ENCODE measurements at regions of chr9 and their contacts with region 1.

Region 1: GRCh38 chr9:133726401-133727276 is 11.5 kb downstream of the SARDH start:
- DNase-seq: peak; percentile 87
- H3K4me3 Mint-ChIP-seq: no peak overlapping the region
- H3K27ac Mint-ChIP-seq: no peak overlapping the region
- H3K4me1 Mint-ChIP-seq: peaks cover 2% of the 10 kb centered on the region
- H3K27me3 Mint-ChIP-seq: peaks cover 9% of the 10 kb centered on the region

Region 2: GRCh38 chr9:133532937-133533668 is 193.5 kb before region 1 on chr9:
- intact Hi-C with region 1: loop called (anchors 1 kb)
- DNase-seq: peak; percentile 88
- H3K4me3 Mint-ChIP-seq: no peak overlapping the region
- H3K27ac Mint-ChIP-seq: no peak overlapping the region
- H3K4me1 Mint-ChIP-seq: no peaks in the 10 kb centered on the region
- H3K27me3 Mint-ChIP-seq: peaks cover 18% of the 10 kb centered on the region

Region 3: DNA sequence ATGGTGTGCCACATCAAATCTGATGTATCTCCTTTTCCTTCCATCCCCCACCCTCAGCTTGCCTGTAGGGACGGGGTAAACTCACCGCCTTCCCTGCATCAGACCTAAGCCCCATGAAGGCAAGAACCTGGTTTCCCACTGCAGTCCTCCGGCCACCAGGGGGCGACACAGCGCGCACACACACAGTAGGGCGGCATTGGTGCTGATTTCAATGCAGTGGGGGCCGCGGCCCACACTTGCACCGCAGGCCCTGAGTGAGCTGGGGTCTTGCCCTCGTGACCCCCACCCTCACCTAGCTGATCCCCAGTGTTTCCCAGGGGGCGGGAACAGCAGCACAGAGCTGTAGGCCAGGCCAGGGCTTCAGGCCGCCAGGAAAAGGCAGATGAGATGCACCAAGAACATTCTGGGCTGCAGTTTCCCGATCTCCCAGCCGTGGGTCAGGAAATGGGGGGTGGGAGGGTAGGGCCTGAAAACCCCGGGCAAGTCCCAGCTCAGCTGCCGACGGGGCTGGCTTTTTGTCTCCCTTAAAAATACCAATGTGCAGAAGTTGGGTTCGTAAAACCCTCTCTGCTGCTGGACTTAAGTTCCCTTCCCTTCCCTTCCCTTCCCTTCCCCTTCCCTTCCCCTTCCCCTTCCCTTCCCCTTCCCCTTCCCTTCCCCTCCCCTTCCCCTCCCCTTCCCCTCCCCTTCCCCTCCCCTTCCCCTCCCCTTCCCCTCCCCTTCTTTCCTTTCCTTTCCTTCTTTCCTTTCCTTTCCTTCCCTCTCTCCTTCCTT is 137.0 kb before region 1 on chr9:
- intact Hi-C with region 1: loop called (anchors 10 kb)
- DNase-seq: peak; percentile 77
- H3K4me3 Mint-ChIP-seq: no peak overlapping the region
- H3K27ac Mint-ChIP-seq: no peak overlapping the region
- H3K4me1 Mint-ChIP-seq: no peaks in the 10 kb centered on the region
- H3K27me3 Mint-ChIP-seq: peaks cover 9% of the 10 kb centered on the region

Region 4: DNA sequence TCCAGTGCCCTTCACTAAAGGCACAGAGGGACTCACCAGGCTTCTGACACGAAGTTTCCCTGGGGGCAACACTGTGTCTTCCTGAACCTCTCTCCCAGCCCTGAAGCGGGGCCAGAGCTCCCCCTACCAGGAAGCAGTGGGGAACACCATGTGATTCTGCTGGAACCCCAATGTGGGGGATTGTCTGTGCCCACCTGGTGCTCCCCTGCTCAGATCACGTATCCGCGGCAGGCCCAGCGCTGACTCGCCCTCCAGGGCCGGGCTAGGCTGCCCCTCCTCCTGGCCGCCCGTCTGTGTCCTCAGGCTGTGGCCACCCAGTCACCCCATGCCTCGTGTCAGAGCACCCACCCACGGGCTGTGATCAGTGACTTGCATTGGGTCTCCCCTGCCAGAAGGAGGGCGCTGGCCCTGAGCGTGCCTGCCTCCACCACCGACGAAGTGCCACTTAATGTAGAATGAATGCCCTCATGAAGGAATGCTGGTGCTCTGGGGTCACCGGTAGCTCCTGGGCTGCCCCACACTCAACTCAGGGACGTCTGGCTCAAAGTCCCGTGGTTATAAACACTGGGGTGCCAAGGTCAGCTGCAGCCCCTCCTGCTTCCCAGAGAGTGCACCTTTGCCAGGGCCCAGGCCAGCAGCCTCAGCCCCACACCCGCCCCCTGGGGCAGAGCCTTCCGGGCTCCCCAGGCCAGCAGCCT is 10.6 kb before region 1 on chr9:
- intact Hi-C with region 1: no loop called
- DNase-seq: peak; percentile 72
- H3K4me3 Mint-ChIP-seq: no peak overlapping the region
- H3K27ac Mint-ChIP-seq: no peak overlapping the region
- H3K4me1 Mint-ChIP-seq: peaks cover 2% of the 10 kb centered on the region
- H3K27me3 Mint-ChIP-seq: peaks cover 7% of the 10 kb centered on the region